ENCODE measurements at regions of chr18 and their contacts with region 1.

Region 1: DNA sequence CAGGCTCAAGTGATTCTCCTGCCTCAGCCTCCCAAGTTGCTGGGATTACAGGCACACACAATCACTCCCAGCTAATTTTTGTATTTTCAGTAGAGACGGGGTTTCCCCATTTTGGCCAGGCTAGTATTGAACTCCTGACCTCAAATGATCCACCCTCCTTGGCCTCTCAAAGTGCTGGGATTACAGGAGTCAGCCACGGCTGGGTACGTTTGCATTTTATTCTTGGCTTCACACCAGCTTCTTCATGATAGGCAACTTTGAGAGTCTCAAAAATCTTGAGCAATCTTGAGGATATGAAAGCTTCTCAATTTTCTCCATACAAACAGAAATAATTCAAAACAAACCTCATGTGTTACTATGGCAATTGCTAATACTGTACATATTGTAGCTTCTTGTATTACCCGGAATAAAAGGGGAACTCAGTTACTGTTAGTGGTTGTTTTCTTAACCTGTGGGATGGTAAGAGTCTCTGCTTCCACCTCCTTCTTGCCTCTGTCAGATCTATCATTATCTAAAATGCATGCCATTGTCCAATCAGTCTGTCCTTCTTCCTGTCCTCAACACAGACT is 102.9 kb upstream of the SYT4 start:
- DNase-seq: no peak
- ATAC-seq: no peak
- H3K4me3 ChIP-seq: no peak overlapping the region
- H3K27ac ChIP-seq: no peak overlapping the region
- H3K4me1 ChIP-seq: no peaks in the 10 kb centered on the region
- H3K27me3 ChIP-seq: no peaks in the 10 kb centered on the region
- CTCF ChIP-seq: no peak

Region 2: GRCh38 chr18:43341014-43341413 is 39.2 kb before region 1 on chr18:
- intact Hi-C with region 1: loop called in 1 of 10 experiments (anchors 2 kb)
- DNase-seq: no peak
- ATAC-seq: no peak
- H3K4me3 ChIP-seq: no peak overlapping the region
- H3K27ac ChIP-seq: no peak overlapping the region
- H3K4me1 ChIP-seq: no peaks in the 10 kb centered on the region
- H3K27me3 ChIP-seq: no peaks in the 10 kb centered on the region
- CTCF ChIP-seq: no peak

Region 3: DNA sequence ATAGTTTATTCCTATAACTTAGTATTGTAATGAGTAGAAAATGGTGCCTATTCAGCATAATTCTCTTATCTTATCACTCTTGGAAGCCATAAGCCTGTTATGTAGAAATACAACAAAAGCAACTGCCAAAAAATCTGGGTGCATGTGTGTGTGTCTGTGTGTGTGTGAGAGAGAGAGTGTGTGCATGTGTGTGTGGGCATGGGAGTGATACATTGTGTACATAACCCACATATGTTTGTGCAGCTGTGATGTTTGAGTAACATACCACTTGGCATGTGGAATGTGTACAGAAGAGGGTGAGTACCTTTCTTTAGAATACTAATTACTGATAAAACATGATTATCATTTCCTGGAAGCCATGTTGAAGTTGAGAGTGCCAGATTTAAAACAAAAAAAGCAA is 539.4 kb after region 1 on chr18:
- intact Hi-C with region 1: no loop called
- DNase-seq: no peak
- ATAC-seq: no peak
- H3K4me3 ChIP-seq: no peak overlapping the region
- H3K27ac ChIP-seq: no peak overlapping the region
- H3K4me1 ChIP-seq: peaks cover 0 to 10% (median 0%) of the 10 kb centered on the region in 9 donors
- H3K27me3 ChIP-seq: no peaks in the 10 kb centered on the region
- CTCF ChIP-seq: no peak

Measured in heart right ventricle (tissue), 16 donors.